Activated CD4-positive, alpha-beta T cell treated with anti-CD3 and anti-CD28 coated beads, Interleukin-2, amount 10 ng/mL, durations not matched to agents 24 days and 14 days (primary cell): ENCODE measurements at regions of chr3 and their contacts with region 1.

Region 1: DNA sequence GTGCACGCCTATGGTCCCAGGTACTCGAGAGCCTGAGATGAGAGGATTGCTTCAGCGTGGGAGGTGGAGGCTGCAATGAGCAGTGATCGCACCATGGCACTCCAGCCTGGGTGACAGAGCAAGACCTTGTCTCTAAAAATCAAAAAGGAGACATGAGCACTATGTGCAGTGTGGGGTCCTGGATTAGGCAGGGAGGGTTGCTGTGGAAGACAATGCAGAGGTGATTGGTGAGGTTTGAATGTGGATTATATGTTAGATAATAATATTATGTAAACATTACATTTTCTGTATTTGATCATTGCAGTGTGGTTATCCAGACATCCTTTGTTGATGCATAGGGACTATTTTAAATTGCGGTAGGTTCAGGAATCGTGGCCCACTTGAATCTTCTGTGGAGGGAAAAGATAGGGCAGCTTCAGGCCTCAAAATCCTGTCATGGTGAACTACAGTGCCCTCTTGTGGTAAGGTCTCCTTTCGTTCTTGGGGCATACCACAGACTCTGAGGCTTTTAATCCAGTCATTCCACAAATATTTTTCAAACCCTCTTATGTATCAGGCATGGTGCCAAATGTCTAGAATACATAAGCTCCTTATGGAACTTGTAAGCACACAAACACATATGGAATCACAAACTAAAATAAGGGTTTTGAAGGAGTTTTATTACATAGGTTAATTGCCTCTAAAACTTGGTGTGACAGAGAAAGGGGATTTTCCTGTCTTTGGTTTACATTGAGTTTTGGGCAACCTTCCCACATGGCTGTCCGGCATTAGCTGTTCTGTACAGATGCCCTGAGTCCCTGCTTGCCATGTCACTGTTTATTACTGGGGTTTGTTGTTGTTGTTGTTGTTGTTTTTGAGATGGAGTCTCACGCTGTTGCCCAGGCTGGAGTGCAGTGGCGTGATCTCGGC is 37.7 kb downstream of the GPD1L start:
- DNase-seq: peak; percentile 88
- H3K4me3 Mint-ChIP-seq: no peak overlapping the region
- H3K27ac Mint-ChIP-seq: no peak overlapping the region
- H3K4me1 Mint-ChIP-seq: peaks cover 14% of the 10 kb centered on the region
- H3K27me3 Mint-ChIP-seq: no peaks in the 10 kb centered on the region

Region 2: GRCh38 chr3:31858439-31858838 is 285.7 kb before region 1 on chr3:
- intact Hi-C with region 1: loop called (anchors 10 kb)
- DNase-seq: no peak
- H3K4me3 Mint-ChIP-seq: no peak overlapping the region
- H3K27ac Mint-ChIP-seq: no peak overlapping the region
- H3K4me1 Mint-ChIP-seq: peaks cover 3% of the 10 kb centered on the region
- H3K27me3 Mint-ChIP-seq: no peaks in the 10 kb centered on the region

Region 3: GRCh38 chr3:32018757-32019564 is 125.1 kb before region 1 on chr3:
- intact Hi-C with region 1: loop called (anchors 1 kb)
- DNase-seq: peak; percentile 62
- H3K4me3 Mint-ChIP-seq: no peak overlapping the region
- H3K27ac Mint-ChIP-seq: no peak overlapping the region
- H3K4me1 Mint-ChIP-seq: no peaks in the 10 kb centered on the region
- H3K27me3 Mint-ChIP-seq: peaks cover 7% of the 10 kb centered on the region